Right ventricle myocardium inferior (tissue), 1 donor: ENCODE measurements at regions of chr4 and their contacts with region 1.

Region 1: GRCh38 chr4:22688236-22688635 is 4.5 kb upstream of the GBA3 start:
- DNase-seq: no peak
- ATAC-seq: no peak

Region 2: GRCh38 chr4:21790438-21791029 is 897.7 kb before region 1 on chr4:
- intact Hi-C with region 1: loop called (anchors 1 kb)
- DNase-seq: no peak
- ATAC-seq: no peak

Region 3: GRCh38 chr4:22410645-22411247 is 277.5 kb before region 1 on chr4:
- intact Hi-C with region 1: loop called (anchors 2 kb)
- DNase-seq: no peak
- ATAC-seq: no peak

Region 4: DNA sequence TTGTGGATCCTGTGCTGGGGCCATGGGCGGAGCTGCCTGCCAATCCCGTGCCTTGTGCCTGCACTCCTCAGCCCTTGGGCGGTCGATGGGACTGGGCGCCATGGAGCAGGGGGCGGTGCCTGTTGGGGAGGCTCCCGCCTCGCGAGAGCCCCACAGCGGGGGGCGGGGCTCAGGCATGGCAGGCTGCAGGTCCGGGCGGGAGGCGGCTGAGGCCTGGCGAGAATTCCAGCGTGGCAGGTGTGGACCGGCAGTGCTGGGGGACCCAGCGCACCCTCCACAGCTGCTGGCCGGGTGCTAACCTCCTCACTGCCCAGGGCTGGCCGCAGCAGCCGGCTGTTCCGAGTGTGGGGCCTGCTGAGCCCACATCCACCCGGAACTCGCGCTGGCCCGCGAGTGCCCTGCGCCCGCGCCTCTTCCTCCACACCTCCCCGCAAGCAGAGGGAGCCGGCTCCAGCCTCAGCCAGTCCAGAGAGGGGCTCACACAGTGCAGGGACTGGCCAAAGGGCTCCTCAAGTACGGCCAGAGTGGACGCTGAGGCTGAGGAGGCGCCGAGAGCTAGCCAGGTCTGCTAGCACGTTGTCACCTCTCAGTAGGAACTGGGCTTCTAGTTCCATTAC is 90.4 kb after region 1 on chr4:
- intact Hi-C with region 1: no loop called
- DNase-seq: no peak
- ATAC-seq: no peak